Testis (tissue), 5 donors: ENCODE measurements at regions of chr5 and their contacts with region 1.

Region 1: GRCh38 chr5:174951146-174951780 is 226.9 kb downstream of the MSX2 start:
- DNase-seq: peak; percentile 75
- H3K4me3 ChIP-seq: no peak overlapping the region
- H3K27ac ChIP-seq: no peak overlapping the region
- H3K4me1 ChIP-seq: no peaks in the 10 kb centered on the region
- H3K27me3 ChIP-seq: no peaks in the 10 kb centered on the region
- CTCF ChIP-seq: peak; percentile 58 to 79 (median 69)
- POLR2A ChIP-seq: no peak

Region 2: GRCh38 chr5:173789031-173789920 is 1162.0 kb before region 1 on chr5:
- intact Hi-C with region 1: no loop called
- DNase-seq: no peak
- H3K4me3 ChIP-seq: no peak overlapping the region
- H3K27ac ChIP-seq: no peak overlapping the region
- H3K4me1 ChIP-seq: no peaks in the 10 kb centered on the region
- H3K27me3 ChIP-seq: no peaks in the 10 kb centered on the region
- CTCF ChIP-seq: no peak
- POLR2A ChIP-seq: no peak

Region 3: DNA sequence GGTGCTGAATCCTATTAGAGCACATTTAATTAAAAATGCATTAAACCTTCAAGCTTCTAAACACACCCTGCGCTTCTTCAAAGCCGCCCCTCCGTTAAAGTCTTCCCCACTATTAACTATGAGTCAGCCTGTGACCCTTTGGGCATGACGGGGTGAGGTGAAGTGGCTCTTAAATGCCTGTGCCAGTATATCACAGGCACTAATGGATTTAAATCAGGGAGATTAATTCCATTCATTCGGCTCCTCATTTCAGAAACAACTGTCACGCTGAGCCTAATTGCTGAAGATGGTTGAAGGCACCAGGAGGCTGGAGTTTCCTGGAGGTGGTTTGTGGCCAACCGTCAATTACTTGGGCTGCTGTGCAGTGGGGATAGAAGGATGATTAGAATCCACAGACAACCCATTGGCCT is 419.5 kb before region 1 on chr5:
- intact Hi-C with region 1: no loop called
- DNase-seq: no peak
- H3K4me3 ChIP-seq: no peak overlapping the region
- H3K27ac ChIP-seq: no peak overlapping the region
- H3K4me1 ChIP-seq: no peaks in the 10 kb centered on the region
- H3K27me3 ChIP-seq: no peaks in the 10 kb centered on the region
- CTCF ChIP-seq: no peak
- POLR2A ChIP-seq: no peak

Region 4: DNA sequence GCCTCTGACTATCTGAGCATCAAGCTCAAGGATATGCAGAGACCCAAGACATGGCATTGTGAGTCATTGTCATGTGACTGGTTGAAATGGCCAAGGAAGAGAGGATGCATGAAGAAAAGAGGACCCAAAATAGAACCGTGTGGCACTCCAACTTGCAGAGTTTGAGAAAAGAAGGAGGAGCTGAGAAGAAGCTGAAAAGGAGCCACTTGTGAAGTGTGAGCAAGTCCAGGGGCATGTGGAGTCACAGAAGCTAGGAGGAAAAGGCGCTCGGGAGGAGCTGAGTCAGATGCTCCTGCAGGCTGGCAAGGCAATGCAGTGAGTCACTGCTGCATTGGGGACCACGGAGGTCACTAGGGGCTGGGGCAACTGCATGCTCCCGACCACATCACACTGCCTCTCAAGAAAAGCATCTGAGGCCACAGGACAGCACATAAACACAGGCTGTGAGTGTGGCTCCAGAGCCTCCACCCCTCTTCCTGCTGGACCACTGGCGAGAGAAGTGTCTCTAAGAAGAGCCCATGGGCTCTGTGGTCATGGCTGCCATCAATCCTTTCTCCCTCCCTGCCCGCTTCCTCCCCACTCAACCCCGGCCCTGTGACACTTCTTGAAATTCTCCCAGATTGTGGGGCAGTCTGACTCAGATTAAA is 295.1 kb after region 1 on chr5:
- intact Hi-C with region 1: no loop called
- DNase-seq: no peak
- H3K4me3 ChIP-seq: no peak overlapping the region
- H3K27ac ChIP-seq: no peak overlapping the region
- H3K4me1 ChIP-seq: no peaks in the 10 kb centered on the region
- H3K27me3 ChIP-seq: no peaks in the 10 kb centered on the region
- CTCF ChIP-seq: no peak
- POLR2A ChIP-seq: no peak

Region 5: DNA sequence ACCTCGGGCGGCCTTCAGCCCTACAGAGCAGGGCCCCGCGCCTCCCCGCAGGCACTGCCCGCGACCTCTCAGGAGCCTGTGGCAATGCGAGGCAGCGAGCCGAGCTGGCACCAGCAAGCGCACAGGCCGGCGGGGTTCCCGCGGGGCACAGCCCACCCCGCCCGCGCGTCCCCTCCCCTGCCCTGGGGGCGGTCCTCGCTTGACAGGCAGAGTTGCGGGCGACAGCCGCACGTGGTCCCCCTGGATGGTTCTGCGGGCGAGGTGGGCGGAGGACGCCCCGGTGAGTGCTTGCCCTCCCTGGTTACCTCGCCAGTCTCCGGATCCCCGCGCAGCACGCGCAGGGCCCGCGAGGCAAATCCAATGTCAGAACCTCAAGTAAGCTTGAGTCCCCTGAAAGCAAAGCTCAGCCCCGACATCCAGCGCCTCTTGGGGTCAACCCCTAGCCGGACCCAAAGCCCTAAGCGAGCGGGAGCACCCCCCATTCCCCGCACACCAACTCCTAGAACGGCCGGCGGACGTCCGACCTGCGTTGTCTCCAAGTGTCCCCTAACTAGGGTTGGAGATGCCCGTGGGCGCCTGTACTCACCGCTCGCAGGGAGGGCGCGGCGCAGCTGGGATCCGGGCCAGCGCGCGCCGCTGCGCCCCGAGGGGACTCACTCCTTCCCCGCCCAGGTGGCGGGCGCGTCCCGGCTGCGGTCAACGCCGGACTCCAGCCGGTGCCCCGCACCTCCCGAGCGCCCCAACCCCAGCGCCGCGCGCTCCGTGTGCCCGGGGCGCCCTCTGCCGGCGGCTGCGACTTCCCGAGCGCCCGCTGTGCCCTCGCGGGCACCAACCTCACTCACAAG is 493.0 kb after region 1 on chr5 and contains the start of gene DRD1:
- intact Hi-C with region 1: loop called (anchors 10 kb)
- DNase-seq: peak; percentile 37
- H3K4me3 ChIP-seq: peak within 1 kb of the TSS in 1 of 2 donors; percentile 0
- H3K27ac ChIP-seq: no peak within 1 kb of the TSS
- H3K4me1 ChIP-seq: no peaks in the 10 kb centered on the region
- H3K27me3 ChIP-seq: no peaks in the 10 kb centered on the region
- CTCF ChIP-seq: peak; percentile 19 to 55 (median 35)
- POLR2A ChIP-seq: no peak
- total RNA-seq, gene DRD1: 0.06 to 0.08 TPM